HepG2 (cell line): ENCODE measurements at regions of chr4 and their contacts with region 1.

Region 1: GRCh38 chr4:165355900-165356300 is 22.9 kb upstream of the CPE start:
- DNase-seq: peak; percentile 72
- ATAC-seq: peak; percentile 87
- H3K4me3 ChIP-seq: no peak overlapping the region
- H3K27ac ChIP-seq: no peak overlapping the region
- H3K4me1 ChIP-seq: peaks cover 25% of the 10 kb centered on the region
- H3K27me3 ChIP-seq: no peaks in the 10 kb centered on the region
- CTCF ChIP-seq: peak; percentile 84
- EP300 ChIP-seq: no peak
- POLR2A ChIP-seq: no peak
- RAD21 ChIP-seq: peak; percentile 77

Region 2: GRCh38 chr4:165378745-165379677 is 23.1 kb after region 1 on chr4 and contains the start of gene CPE:
- CTCF ChIA-PET with region 1: interaction called, 6 read pairs
- POLR2A ChIA-PET with region 1: interaction called, 10 read pairs
- in situ Hi-C with region 1: no loop called
- intact Hi-C with region 1: loop called (anchors 1 kb)
- DNase-seq: peak; percentile 81
- ATAC-seq: peak; percentile 99
- H3K4me3 ChIP-seq: peak within 1 kb of the TSS; percentile 79 to 91 (median 85)
- H3K27ac ChIP-seq: peak within 1 kb of the TSS; percentile 59
- H3K4me1 ChIP-seq: peaks cover 49% of the 10 kb centered on the region
- H3K27me3 ChIP-seq: no peaks in the 10 kb centered on the region; a peak in 1 of 5 replicates
- CTCF ChIP-seq: peak; percentile 84
- EP300 ChIP-seq: no peak
- POLR2A ChIP-seq: peak; percentile 94 to 95
- RAD21 ChIP-seq: peak; percentile 87
- total RNA-seq, gene CPE: 94.9 and 268 TPM in 2 replicates

Region 3: GRCh38 chr4:165403637-165404036 is 47.7 kb after region 1 on chr4:
- CTCF ChIA-PET with region 1: no interaction called
- POLR2A ChIA-PET with region 1: no interaction called
- in situ Hi-C with region 1: no loop called
- intact Hi-C with region 1: no loop called
- DNase-seq: no peak
- ATAC-seq: peak; percentile 35; the same call in 2 of the 3 replicates
- H3K4me3 ChIP-seq: no peak overlapping the region
- H3K27ac ChIP-seq: no peak overlapping the region
- H3K4me1 ChIP-seq: no peaks in the 10 kb centered on the region
- H3K27me3 ChIP-seq: no peaks in the 10 kb centered on the region
- CTCF ChIP-seq: no peak
- EP300 ChIP-seq: no peak
- POLR2A ChIP-seq: no peak
- RAD21 ChIP-seq: no peak

Region 4: GRCh38 chr4:165425629-165426028 is 69.7 kb after region 1 on chr4:
- CTCF ChIA-PET with region 1: no interaction called
- POLR2A ChIA-PET with region 1: no interaction called
- in situ Hi-C with region 1: no loop called
- intact Hi-C with region 1: loop called (anchors 1 kb)
- DNase-seq: no peak
- ATAC-seq: peak; percentile 40; the same call in 2 of the 3 replicates
- H3K4me3 ChIP-seq: no peak overlapping the region
- H3K27ac ChIP-seq: no peak overlapping the region
- H3K4me1 ChIP-seq: peaks cover 8% of the 10 kb centered on the region
- H3K27me3 ChIP-seq: no peaks in the 10 kb centered on the region
- CTCF ChIP-seq: peak; percentile 27
- EP300 ChIP-seq: no peak
- POLR2A ChIP-seq: no peak
- RAD21 ChIP-seq: no peak

Region 5: GRCh38 chr4:165464813-165465381 is 109.0 kb after region 1 on chr4:
- CTCF ChIA-PET with region 1: interaction called, 28 read pairs
- POLR2A ChIA-PET with region 1: no interaction called
- in situ Hi-C with region 1: loop called (anchors 5 kb)
- intact Hi-C with region 1: loop called (anchors 1 kb)
- DNase-seq: peak; percentile 18
- ATAC-seq: peak; percentile 79
- H3K4me3 ChIP-seq: no peak overlapping the region
- H3K27ac ChIP-seq: no peak overlapping the region
- H3K4me1 ChIP-seq: no peaks in the 10 kb centered on the region
- H3K27me3 ChIP-seq: no peaks in the 10 kb centered on the region
- CTCF ChIP-seq: peak; percentile 71
- EP300 ChIP-seq: no peak
- POLR2A ChIP-seq: no peak
- RAD21 ChIP-seq: peak; percentile 68

Region 6: GRCh38 chr4:165787516-165788274 is 431.8 kb after region 1 on chr4:
- CTCF ChIA-PET with region 1: no interaction called
- POLR2A ChIA-PET with region 1: no interaction called
- in situ Hi-C with region 1: no loop called
- intact Hi-C with region 1: no loop called
- DNase-seq: no peak
- ATAC-seq: no peak
- H3K4me3 ChIP-seq: no peak overlapping the region
- H3K27ac ChIP-seq: no peak overlapping the region
- H3K4me1 ChIP-seq: no peaks in the 10 kb centered on the region
- H3K27me3 ChIP-seq: no peaks in the 10 kb centered on the region
- CTCF ChIP-seq: no peak
- EP300 ChIP-seq: no peak
- POLR2A ChIP-seq: no peak
- RAD21 ChIP-seq: no peak

Region 7: GRCh38 chr4:166091912-166092510 is 736.1 kb after region 1 on chr4:
- CTCF ChIA-PET with region 1: no interaction called
- POLR2A ChIA-PET with region 1: no interaction called
- in situ Hi-C with region 1: no loop called
- intact Hi-C with region 1: loop called (anchors 10 kb)
- DNase-seq: peak; percentile 28
- ATAC-seq: peak; percentile 49; the same call in 1 of the 3 replicates
- H3K4me3 ChIP-seq: no peak overlapping the region
- H3K27ac ChIP-seq: no peak overlapping the region
- H3K4me1 ChIP-seq: no peaks in the 10 kb centered on the region
- H3K27me3 ChIP-seq: peaks cover 0 to 2% of the 10 kb centered on the region in 2 experiments; a peak in 1 of 5 replicates
- CTCF ChIP-seq: peak; percentile 67
- EP300 ChIP-seq: no peak
- POLR2A ChIP-seq: no peak
- RAD21 ChIP-seq: 0 out of 2 replicates have a peak, but pooled peaks have one; percentile 22